CD4-positive, alpha-beta T cell (primary cell): ENCODE measurements at regions of chr18 and their contacts with region 1.

Region 1: GRCh38 chr18:46250084-46250811 is 146.1 kb downstream of the HAUS1 start:
- DNase-seq: peak in 13 of 14 experiments; percentile 3 to 93 (median 23)
- ATAC-seq: peak; percentile 95
- H3K4me3 ChIP-seq: peak overlapping the region; percentile 46
- H3K4me3 Mint-ChIP-seq: peak overlapping the region; percentile 80
- H3K27ac ChIP-seq: peak overlapping the region; percentile 84 to 88
- H3K27ac Mint-ChIP-seq: peak overlapping the region; percentile 86
- H3K4me1 ChIP-seq: peaks cover 42% of the 10 kb centered on the region
- H3K4me1 Mint-ChIP-seq: peaks cover 57% of the 10 kb centered on the region
- H3K27me3 ChIP-seq: no peaks in the 10 kb centered on the region
- H3K27me3 Mint-ChIP-seq: no peaks in the 10 kb centered on the region
- CTCF ChIP-seq: no peak

Region 2: GRCh38 chr18:46213295-46213694 is 37.0 kb before region 1 on chr18:
- CTCF ChIA-PET with region 1: no interaction called
- POLR2A ChIA-PET with region 1: no interaction called
- intact Hi-C with region 1: loop called (anchors 5 kb)
- DNase-seq: peak in 3 of 14 experiments; percentile 57 to 58 (median 57)
- ATAC-seq: peak; percentile 62
- H3K4me3 ChIP-seq: no peak overlapping the region
- H3K4me3 Mint-ChIP-seq: peak overlapping the region; percentile 5
- H3K27ac ChIP-seq: no peak overlapping the region
- H3K27ac Mint-ChIP-seq: peak overlapping the region; percentile 34
- H3K4me1 ChIP-seq: peaks cover 25% of the 10 kb centered on the region
- H3K4me1 Mint-ChIP-seq: peaks cover 88% of the 10 kb centered on the region
- H3K27me3 ChIP-seq: no peaks in the 10 kb centered on the region
- H3K27me3 Mint-ChIP-seq: no peaks in the 10 kb centered on the region
- CTCF ChIP-seq: peak; percentile 75

Region 3: GRCh38 chr18:46917108-46917802 is 667.0 kb after region 1 on chr18 and contains the starts of genes KATNAL2 and PIAS2:
- CTCF ChIA-PET with region 1: no interaction called
- POLR2A ChIA-PET with region 1: no interaction called
- intact Hi-C with region 1: loop called in 1 of 2 experiments (anchors 10 kb)
- DNase-seq: peak; percentile 55 to 90 (median 70)
- ATAC-seq: peak; percentile 86
- H3K4me3 ChIP-seq: peak within 1 kb of the TSS; percentile 82
- H3K4me3 Mint-ChIP-seq: peak within 1 kb of the TSS; percentile 97
- H3K27ac ChIP-seq: peak within 1 kb of the TSS in 1 of 2 donors; percentile 56
- H3K27ac Mint-ChIP-seq: peak within 1 kb of the TSS; percentile 92
- H3K4me1 ChIP-seq: peaks cover 23% of the 10 kb centered on the region
- H3K4me1 Mint-ChIP-seq: peaks cover 55% of the 10 kb centered on the region
- H3K27me3 ChIP-seq: no peaks in the 10 kb centered on the region
- H3K27me3 Mint-ChIP-seq: no peaks in the 10 kb centered on the region
- CTCF ChIP-seq: no peak
- total RNA-seq, gene KATNAL2: 1.5 to 2.0 TPM
- total RNA-seq, gene PIAS2: 32.0 to 36.3 TPM